HepG2 (cell line): ENCODE measurements at regions of chr4 and their contacts with region 1.

Region 1: DNA sequence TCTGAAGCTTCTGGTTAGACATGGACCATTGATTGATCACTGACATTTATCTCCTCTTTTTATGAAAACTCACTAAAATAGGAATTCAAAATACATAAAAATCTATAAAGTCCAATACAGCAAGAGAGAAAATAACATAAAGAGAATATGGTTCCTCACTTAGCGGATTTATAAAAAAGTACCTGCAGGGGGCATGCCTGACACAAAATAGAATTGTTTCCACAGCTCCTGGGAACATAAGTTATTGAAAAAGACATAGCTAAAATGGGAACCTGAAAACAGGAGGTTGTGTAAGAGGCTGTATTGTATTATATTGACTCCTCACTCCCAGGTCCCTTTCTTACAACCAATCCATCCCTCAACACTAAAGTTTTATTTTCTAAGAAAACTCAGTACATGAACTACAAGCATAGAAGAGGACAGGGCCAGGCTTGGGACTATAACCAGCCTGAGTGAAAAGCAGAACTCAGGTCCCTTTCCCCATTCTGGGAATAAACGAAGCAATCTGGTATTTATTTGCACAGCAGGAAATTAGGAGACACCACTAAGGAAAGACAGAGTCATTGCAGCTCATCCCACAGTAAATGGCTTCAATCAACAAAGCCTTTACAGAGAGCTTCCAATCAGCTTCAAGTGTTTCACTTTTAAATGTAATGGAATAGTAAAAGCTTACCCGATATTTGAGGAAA is 121.1 kb upstream of the NDST4 start:
- DNase-seq: peak; percentile 5
- ATAC-seq: peak; percentile 52; the same call in 2 of the 3 replicates
- H3K4me3 ChIP-seq: no peak overlapping the region
- H3K27ac ChIP-seq: no peak overlapping the region
- H3K4me1 ChIP-seq: no peaks in the 10 kb centered on the region
- H3K27me3 ChIP-seq: no peaks in the 10 kb centered on the region; a peak in 1 of 5 replicates
- CTCF ChIP-seq: peak; percentile 34; the same call in 1 of the 2 replicates
- EP300 ChIP-seq: no peak
- POLR2A ChIP-seq: no peak
- RAD21 ChIP-seq: no peak

Region 2: GRCh38 chr4:115537387-115537786 is 302.8 kb after region 1 on chr4:
- CTCF ChIA-PET with region 1: no interaction called
- POLR2A ChIA-PET with region 1: no interaction called
- in situ Hi-C with region 1: no loop called
- intact Hi-C with region 1: loop called (anchors 10 kb)
- DNase-seq: no peak
- ATAC-seq: no peak
- H3K4me3 ChIP-seq: no peak overlapping the region
- H3K27ac ChIP-seq: no peak overlapping the region
- H3K4me1 ChIP-seq: no peaks in the 10 kb centered on the region
- H3K27me3 ChIP-seq: no peaks in the 10 kb centered on the region
- CTCF ChIP-seq: no peak
- EP300 ChIP-seq: no peak
- POLR2A ChIP-seq: no peak
- RAD21 ChIP-seq: no peak

Region 3: GRCh38 chr4:115790812-115791211 is 556.3 kb after region 1 on chr4:
- CTCF ChIA-PET with region 1: no interaction called
- POLR2A ChIA-PET with region 1: no interaction called
- in situ Hi-C with region 1: no loop called
- intact Hi-C with region 1: loop called (anchors 5 kb)
- DNase-seq: no peak
- ATAC-seq: no peak
- H3K4me3 ChIP-seq: no peak overlapping the region
- H3K27ac ChIP-seq: no peak overlapping the region
- H3K4me1 ChIP-seq: no peaks in the 10 kb centered on the region
- H3K27me3 ChIP-seq: no peaks in the 10 kb centered on the region
- CTCF ChIP-seq: no peak
- EP300 ChIP-seq: no peak
- POLR2A ChIP-seq: no peak
- RAD21 ChIP-seq: no peak

Region 4: GRCh38 chr4:115851918-115852766 is 617.6 kb after region 1 on chr4:
- CTCF ChIA-PET with region 1: interaction called, 5 read pairs
- POLR2A ChIA-PET with region 1: no interaction called
- in situ Hi-C with region 1: no loop called
- intact Hi-C with region 1: loop called (anchors 1 kb)
- DNase-seq: peak; percentile 53
- ATAC-seq: peak; percentile 94
- H3K4me3 ChIP-seq: no peak overlapping the region
- H3K27ac ChIP-seq: no peak overlapping the region
- H3K4me1 ChIP-seq: no peaks in the 10 kb centered on the region
- H3K27me3 ChIP-seq: no peaks in the 10 kb centered on the region
- CTCF ChIP-seq: peak; percentile 61
- EP300 ChIP-seq: no peak
- POLR2A ChIP-seq: no peak
- RAD21 ChIP-seq: 0 out of 2 replicates have a peak, but pooled peaks have one; percentile 15